ENCODE measurements at regions of chr6 and their contacts with region 1.

Region 1: DNA sequence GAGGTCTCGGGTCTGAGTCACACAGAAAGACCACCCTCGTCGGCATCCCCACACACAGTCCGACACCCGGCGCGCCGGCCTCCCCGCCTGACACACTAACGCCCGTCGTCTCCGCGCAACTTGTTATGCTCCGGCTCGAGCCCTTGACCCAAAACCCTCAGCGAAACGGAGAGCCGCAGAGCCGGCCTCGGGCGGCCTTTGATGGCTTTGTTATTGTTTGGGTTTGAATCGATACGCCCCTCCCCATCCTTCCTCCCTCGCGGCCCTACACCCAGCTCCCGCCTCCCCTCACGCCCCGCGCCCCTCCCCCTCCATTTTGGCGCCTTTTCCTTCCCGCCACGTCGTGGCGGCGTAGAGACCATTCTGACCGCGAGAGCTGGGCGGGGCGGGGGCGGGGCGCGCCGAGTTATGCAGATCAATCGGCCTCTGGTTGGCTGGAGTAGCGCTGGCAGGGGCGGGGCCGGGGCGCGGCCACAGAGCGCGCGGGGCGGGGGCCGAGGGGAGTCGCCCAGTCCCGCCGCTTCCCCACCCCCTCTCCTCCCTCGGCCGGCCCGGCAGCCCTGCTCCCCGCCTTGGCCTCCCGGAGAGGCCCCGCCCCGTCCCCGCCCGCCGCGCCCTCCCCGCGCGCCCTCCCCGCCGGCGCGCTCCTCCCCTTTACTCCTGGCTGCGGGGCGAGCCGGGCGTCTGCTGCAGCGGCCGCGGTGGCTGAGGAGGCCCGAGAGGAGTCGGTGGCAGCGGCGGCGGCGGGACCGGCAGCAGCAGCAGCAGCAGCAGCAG is at the start of gene PIM1:
- DNase-seq: peak; percentile 100
- ATAC-seq: peak; percentile 95
- total RNA-seq, gene PIM1: 27.8 TPM

Region 2: GRCh38 chr6:37018198-37019064 is 151.3 kb before region 1 on chr6:
- intact Hi-C with region 1: loop called (anchors 2 kb)
- DNase-seq: peak; percentile 92
- ATAC-seq: peak; percentile 97

Region 3: DNA sequence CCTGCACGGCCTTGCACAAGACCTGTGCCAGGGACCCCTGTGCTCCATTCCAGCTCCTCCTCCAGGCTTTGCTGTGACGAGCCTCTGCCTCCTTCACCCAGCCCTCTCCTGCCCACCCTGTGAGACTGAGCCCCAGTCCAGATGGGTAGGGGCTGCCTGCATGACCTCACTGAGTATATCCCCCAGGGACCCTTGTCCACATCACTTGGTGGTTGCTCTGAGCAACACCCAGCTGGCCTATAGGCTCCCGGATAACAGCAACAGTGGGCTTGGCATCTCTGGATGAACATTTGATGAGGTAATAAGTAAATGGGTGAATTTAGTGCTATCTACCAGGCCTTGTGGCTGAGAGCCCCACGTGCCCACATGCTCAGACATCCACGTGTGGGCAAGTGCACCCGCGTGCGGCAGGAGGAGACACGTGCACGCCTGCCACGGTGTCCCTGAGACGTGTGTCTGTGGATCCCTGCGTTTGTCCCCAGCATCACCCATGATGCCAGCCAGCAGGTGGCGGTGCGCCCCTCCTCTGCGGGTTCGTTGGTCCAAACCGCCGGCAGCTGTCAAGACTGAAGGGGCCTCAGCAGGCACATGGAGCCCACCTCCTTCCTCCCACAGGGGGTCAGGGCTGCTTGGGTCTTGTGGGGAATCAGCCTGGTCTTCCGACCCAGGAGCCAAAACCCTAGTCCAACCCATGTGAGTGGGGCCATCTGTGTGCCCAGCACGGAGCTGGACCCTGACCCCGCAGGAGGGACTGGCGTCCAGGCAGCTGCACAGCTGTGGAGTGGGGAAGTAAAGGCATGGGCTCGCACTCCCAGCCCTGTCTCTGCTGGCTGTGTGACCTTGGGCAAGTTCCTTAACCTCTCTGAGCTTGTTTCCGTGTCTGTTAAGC is 118.3 kb before region 1 on chr6:
- intact Hi-C with region 1: loop called (anchors 1 kb)
- DNase-seq: peak; percentile 96
- ATAC-seq: peak; percentile 75

Region 4: GRCh38 chr6:37131104-37131959 is 38.4 kb before region 1 on chr6:
- intact Hi-C with region 1: loop called (anchors 2 kb)
- DNase-seq: peak; percentile 78
- ATAC-seq: peak; percentile 78

Measured in Right ventricle myocardium inferior (tissue), 1 donor.